Activated CD8-positive, alpha-beta T cell treated with anti-CD3 and anti-CD28 coated beads for 36 hours (primary cell): ENCODE measurements at regions of chr2 and their contacts with region 1.

Region 1: GRCh38 chr2:238426568-238427434 is at the start of gene ASB1:
- DNase-seq: peak; percentile 87
- ATAC-seq: peak; percentile 85
- H3K4me3 Mint-ChIP-seq: peak within 1 kb of the TSS; percentile 89
- H3K27ac Mint-ChIP-seq: peak within 1 kb of the TSS; percentile 93
- H3K4me1 Mint-ChIP-seq: peaks cover 39% of the 10 kb centered on the region
- H3K27me3 Mint-ChIP-seq: no peaks in the 10 kb centered on the region
- CTCF ChIP-seq: no peak
- total RNA-seq, gene ASB1: 39.8 to 48.1 TPM

Region 2: GRCh38 chr2:238438856-238439849 is 12.4 kb after region 1 on chr2:
- CTCF ChIA-PET with region 1: interaction called, 7 read pairs
- POLR2A ChIA-PET with region 1: interaction called, 19 read pairs
- intact Hi-C with region 1: no loop called
- DNase-seq: peak; percentile 84
- ATAC-seq: peak; percentile 94
- H3K4me3 Mint-ChIP-seq: peak overlapping the region; percentile 37
- H3K27ac Mint-ChIP-seq: peak overlapping the region; percentile 84
- H3K4me1 Mint-ChIP-seq: peaks cover 65% of the 10 kb centered on the region
- H3K27me3 Mint-ChIP-seq: no peaks in the 10 kb centered on the region
- CTCF ChIP-seq: no peak